ENCODE measurements at regions of chr17 and their contacts with region 1.

Region 1: DNA sequence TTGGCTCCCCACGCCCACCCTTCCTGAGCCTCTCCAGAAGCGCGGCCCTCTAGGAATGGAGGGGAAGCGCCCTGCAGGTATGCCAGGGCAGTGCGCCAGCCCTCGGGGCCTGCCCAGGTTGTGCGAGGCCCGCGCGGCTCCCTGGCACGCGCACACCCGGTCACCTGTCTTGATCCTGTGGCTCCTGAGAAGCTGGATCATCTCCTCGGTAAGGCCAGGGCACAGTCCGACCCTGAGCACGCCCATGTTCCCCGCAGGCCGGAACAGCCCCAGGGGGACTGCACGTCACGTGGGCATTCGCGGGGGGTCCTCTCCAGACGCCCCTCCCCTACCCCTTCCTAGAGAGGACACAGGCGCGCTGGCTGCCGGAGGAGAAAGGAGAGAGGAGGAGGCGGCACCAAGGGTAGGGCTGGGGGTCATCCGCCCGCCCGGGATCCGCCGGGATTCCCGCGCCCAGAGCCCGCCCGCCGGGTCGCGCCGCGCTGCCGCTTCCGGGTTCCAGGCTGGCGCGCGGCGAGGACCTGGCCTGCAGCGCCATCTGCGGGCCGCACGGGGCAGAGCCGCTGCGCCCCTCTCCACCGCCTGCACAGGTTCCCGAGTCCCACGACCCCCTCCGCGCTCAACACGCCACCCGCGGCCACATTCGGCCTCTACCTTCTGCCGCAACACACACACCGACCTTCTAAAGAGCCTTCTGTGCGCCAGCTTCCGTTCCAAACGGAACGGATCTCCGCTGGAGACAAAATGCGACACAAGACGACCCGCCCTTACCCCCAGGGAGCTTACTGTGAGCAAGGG is at the start of gene RAD51D:
- DNase-seq: peak; percentile 73 to 86 (median 78)
- H3K4me3 ChIP-seq: peak within 1 kb of the TSS; percentile 95
- H3K27ac ChIP-seq: peak within 1 kb of the TSS; percentile 58 to 60
- H3K4me1 ChIP-seq: no peaks in the 10 kb centered on the region
- H3K27me3 ChIP-seq: no peaks in the 10 kb centered on the region
- CTCF ChIP-seq: peak; percentile 81 to 96 (median 89)
- EP300 ChIP-seq: no peak
- POLR2A ChIP-seq: peak; percentile 38
- total RNA-seq, gene RAD51D: 7.3 to 16.7 (median 11.5) TPM

Region 2: GRCh38 chr17:34254651-34255380 is 864.8 kb before region 1 on chr17 and contains the start of gene CCL2:
- intact Hi-C with region 1: loop called in 1 of 4 experiments (anchors 10 kb)
- DNase-seq: peak; percentile 41 to 75 (median 58)
- H3K4me3 ChIP-seq: peak within 1 kb of the TSS; percentile 15
- H3K27ac ChIP-seq: peak within 1 kb of the TSS in 1 of 2 donors; percentile 32
- H3K4me1 ChIP-seq: peaks cover 15% of the 10 kb centered on the region
- H3K27me3 ChIP-seq: no peaks in the 10 kb centered on the region
- CTCF ChIP-seq: no peak
- EP300 ChIP-seq: no peak
- POLR2A ChIP-seq: no peak
- total RNA-seq, gene CCL2: 5.0 to 156 (median 25.3) TPM

Region 3: GRCh38 chr17:34420254-34420766 is 699.3 kb before region 1 on chr17:
- intact Hi-C with region 1: loop called in 3 of 4 experiments (anchors 2 to 10 kb)
- DNase-seq: peak; percentile 29 to 68 (median 66)
- H3K4me3 ChIP-seq: no peak overlapping the region
- H3K27ac ChIP-seq: no peak overlapping the region
- H3K4me1 ChIP-seq: no peaks in the 10 kb centered on the region
- H3K27me3 ChIP-seq: no peaks in the 10 kb centered on the region
- CTCF ChIP-seq: peak; percentile 75 to 77 (median 75)
- EP300 ChIP-seq: no peak
- POLR2A ChIP-seq: no peak

Region 4: DNA sequence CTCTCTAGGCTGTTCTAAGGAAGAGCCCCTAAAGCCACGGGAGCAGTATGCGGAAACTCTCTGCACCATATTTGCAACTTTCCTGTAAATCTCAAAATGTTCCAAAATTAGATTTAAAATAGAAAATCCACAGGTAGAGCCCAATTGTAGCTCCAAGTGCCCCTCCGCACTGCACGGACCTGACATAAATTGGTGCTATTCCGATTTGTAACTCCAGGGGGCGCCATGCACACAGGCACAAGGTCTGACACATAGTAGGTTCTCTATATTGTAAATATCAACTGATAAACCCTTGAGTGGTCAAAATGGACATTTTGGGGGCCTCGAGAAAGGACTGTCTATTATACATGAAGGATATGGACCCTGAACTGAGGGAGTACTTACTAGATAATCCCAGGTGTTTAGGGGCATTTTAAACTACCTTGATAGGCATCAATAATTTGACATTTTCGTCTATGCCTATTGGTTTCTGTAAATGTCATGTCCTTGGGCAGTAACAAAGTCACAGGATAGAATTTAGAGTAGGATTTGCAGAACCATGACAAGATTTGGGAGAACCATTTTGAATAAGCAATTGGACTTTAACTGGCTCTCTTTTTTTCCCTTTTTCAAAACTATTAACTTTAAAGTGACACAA is 576.7 kb before region 1 on chr17:
- intact Hi-C with region 1: loop called in 1 of 4 experiments (anchors 5 kb)
- DNase-seq: peak in 1 of 5 donors; percentile 24
- H3K4me3 ChIP-seq: no peak overlapping the region
- H3K27ac ChIP-seq: no peak overlapping the region
- H3K4me1 ChIP-seq: no peaks in the 10 kb centered on the region
- H3K27me3 ChIP-seq: no peaks in the 10 kb centered on the region
- CTCF ChIP-seq: peak in 2 of 3 donors; percentile 27 to 32
- EP300 ChIP-seq: no peak
- POLR2A ChIP-seq: no peak